Naive thymus-derived CD4-positive, alpha-beta T cell (primary cell): ENCODE measurements at regions of chr1 and their contacts with region 1.

Region 1: DNA sequence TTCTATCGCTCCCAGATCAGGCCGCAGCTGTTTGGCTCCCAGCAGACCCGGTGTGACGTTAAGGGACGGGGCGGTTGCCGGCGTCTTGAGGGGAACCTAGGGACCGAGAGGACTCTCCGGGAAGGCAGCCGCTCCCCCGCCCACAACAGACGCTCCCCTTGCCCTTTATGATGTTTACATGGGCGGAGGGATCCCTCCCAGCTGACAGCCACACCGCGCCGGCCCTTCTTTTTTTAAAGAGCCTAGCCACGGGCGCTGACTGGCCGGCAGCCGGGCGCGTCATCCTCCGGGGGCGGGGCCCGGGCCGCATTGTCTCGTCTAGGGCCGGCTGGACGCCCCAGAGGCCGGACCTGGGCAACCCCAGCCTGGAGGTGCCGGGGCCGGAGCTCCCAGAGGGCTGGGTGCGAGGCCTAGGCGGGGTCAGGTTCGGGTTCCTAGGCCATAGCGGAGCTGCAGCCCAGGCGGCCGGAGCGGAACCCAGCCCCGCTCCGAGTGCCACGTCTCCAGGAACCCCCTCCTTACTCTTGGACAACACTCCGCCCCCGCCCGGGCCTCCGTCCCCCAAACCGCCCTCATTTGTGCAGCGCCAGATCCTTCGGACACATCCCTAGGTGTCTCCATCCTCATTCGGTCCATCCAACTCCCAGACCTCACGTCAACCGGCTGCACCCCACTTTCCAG is at the start of gene PCAT6:
- DNase-seq: peak; percentile 70 to 90 (median 83)
- ATAC-seq: peak; percentile 90
- H3K4me3 ChIP-seq: peak within 1 kb of the TSS; percentile 84
- H3K4me3 Mint-ChIP-seq: peak within 1 kb of the TSS; percentile 88 to 94 (median 90)
- H3K27ac ChIP-seq: peak within 1 kb of the TSS; percentile 70
- H3K27ac Mint-ChIP-seq: peak within 1 kb of the TSS; percentile 49 to 93 (median 90)
- H3K4me1 ChIP-seq: peaks cover 19% of the 10 kb centered on the region in 2 donors
- H3K4me1 Mint-ChIP-seq: peaks cover 27 to 42% (median 39%) of the 10 kb centered on the region in 7 donors
- H3K27me3 ChIP-seq: no peaks in the 10 kb centered on the region
- H3K27me3 Mint-ChIP-seq: peaks cover 0 to 18% (median 0%) of the 10 kb centered on the region in 5 donors
- total RNA-seq, gene PCAT6: 0.70 to 1.5 (median 0.94) TPM in 4 of 5 experiments, not detected in the other

Region 2: GRCh38 chr1:202160377-202160940 is 650.3 kb before region 1 on chr1 and contains the start of gene PTPN7:
- CTCF ChIA-PET with region 1: no interaction called
- POLR2A ChIA-PET with region 1: no interaction called
- intact Hi-C with region 1: loop called in 1 of 2 experiments (anchors 5 kb)
- DNase-seq: peak; percentile 58 to 84 (median 80)
- ATAC-seq: peak; percentile 80
- H3K4me3 ChIP-seq: peak within 1 kb of the TSS; percentile 98
- H3K4me3 Mint-ChIP-seq: peak within 1 kb of the TSS; percentile 91 to 99 (median 98)
- H3K27ac ChIP-seq: peak within 1 kb of the TSS; percentile 90
- H3K27ac Mint-ChIP-seq: peak within 1 kb of the TSS; percentile 97 to 99 (median 98)
- H3K4me1 ChIP-seq: peaks cover 77 to 84% of the 10 kb centered on the region in 2 donors
- H3K4me1 Mint-ChIP-seq: peaks cover 47 to 98% (median 82%) of the 10 kb centered on the region in 7 donors
- H3K27me3 ChIP-seq: no peaks in the 10 kb centered on the region
- H3K27me3 Mint-ChIP-seq: no peaks in the 10 kb centered on the region
- total RNA-seq, gene PTPN7: 43.2 to 258 (median 97.0) TPM

Region 3: GRCh38 chr1:202416641-202417040 is 394.1 kb before region 1 on chr1:
- CTCF ChIA-PET with region 1: no interaction called
- POLR2A ChIA-PET with region 1: no interaction called
- intact Hi-C with region 1: no loop called
- DNase-seq: no peak
- ATAC-seq: no peak
- H3K4me3 ChIP-seq: no peak overlapping the region
- H3K4me3 Mint-ChIP-seq: no peak overlapping the region
- H3K27ac ChIP-seq: no peak overlapping the region
- H3K27ac Mint-ChIP-seq: no peak overlapping the region
- H3K4me1 ChIP-seq: no peaks in the 10 kb centered on the region
- H3K4me1 Mint-ChIP-seq: peaks cover 0 to 1% (median 0%) of the 10 kb centered on the region in 7 donors
- H3K27me3 ChIP-seq: no peaks in the 10 kb centered on the region
- H3K27me3 Mint-ChIP-seq: no peaks in the 10 kb centered on the region

Region 4: DNA sequence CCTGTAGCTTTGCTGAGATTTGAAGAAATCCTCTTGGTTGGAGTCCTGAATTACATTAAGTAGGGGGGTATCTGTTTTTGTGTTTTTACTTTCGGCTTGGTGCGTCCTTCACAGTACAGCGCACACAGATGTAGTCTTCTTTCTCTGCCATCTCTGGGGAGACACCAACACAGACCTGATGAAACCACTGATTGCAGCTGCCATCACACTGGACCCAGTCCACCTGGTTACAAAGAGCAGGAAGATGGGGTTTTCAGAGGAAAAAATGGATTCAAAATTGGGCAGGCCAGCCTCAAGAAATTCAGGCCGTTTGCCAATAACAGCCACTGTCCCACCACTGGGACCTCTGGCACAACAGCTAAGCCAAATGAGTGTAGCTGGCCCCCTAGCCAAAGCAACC is 81.8 kb before region 1 on chr1:
- CTCF ChIA-PET with region 1: no interaction called
- POLR2A ChIA-PET with region 1: no interaction called
- intact Hi-C with region 1: no loop called
- DNase-seq: no peak
- ATAC-seq: no peak
- H3K4me3 ChIP-seq: no peak overlapping the region
- H3K4me3 Mint-ChIP-seq: no peak overlapping the region
- H3K27ac ChIP-seq: no peak overlapping the region
- H3K27ac Mint-ChIP-seq: peak overlapping the region in 2 of 9 donors; percentile 2 to 64
- H3K4me1 ChIP-seq: no peaks in the 10 kb centered on the region
- H3K4me1 Mint-ChIP-seq: peaks cover 0 to 4% (median 0%) of the 10 kb centered on the region in 7 donors
- H3K27me3 ChIP-seq: no peaks in the 10 kb centered on the region
- H3K27me3 Mint-ChIP-seq: no peaks in the 10 kb centered on the region

Region 5: DNA sequence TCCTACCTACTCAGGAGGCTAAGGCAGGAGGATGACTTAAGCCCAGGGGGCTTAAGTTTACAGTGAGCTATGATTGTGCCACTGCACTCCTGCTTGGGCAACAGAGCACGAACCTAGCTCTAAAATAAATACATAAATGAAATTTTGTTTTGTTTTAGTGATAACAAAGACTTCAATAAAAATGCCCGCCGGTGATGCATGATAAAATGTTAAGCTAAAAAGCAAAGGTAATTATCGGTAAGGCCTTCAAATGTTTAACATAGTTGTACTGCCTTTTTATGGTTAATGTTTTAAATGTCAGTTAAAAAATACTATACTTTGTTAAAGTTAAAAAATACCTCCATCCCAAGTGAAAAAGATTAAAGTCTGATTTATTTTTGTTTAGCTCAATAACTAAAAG is 29.6 kb before region 1 on chr1:
- CTCF ChIA-PET with region 1: no interaction called
- POLR2A ChIA-PET with region 1: interaction called, 4 read pairs
- intact Hi-C with region 1: loop called in 1 of 2 experiments (anchors 2 kb)
- DNase-seq: no peak
- ATAC-seq: no peak
- H3K4me3 ChIP-seq: no peak overlapping the region
- H3K4me3 Mint-ChIP-seq: no peak overlapping the region
- H3K27ac ChIP-seq: no peak overlapping the region
- H3K27ac Mint-ChIP-seq: peak overlapping the region in 1 of 9 donors; percentile 62
- H3K4me1 ChIP-seq: no peaks in the 10 kb centered on the region
- H3K4me1 Mint-ChIP-seq: peaks cover 8 to 57% (median 32%) of the 10 kb centered on the region in 7 donors
- H3K27me3 ChIP-seq: no peaks in the 10 kb centered on the region
- H3K27me3 Mint-ChIP-seq: no peaks in the 10 kb centered on the region

Region 6: GRCh38 chr1:202888531-202889360 is 78.0 kb after region 1 on chr1 and contains the start of gene RABIF:
- CTCF ChIA-PET with region 1: no interaction called
- POLR2A ChIA-PET with region 1: interaction called, 8 read pairs
- intact Hi-C with region 1: loop called (anchors 1 kb)
- DNase-seq: peak; percentile 93 to 97 (median 95)
- ATAC-seq: peak; percentile 94
- H3K4me3 ChIP-seq: peak within 1 kb of the TSS; percentile 90
- H3K4me3 Mint-ChIP-seq: peak within 1 kb of the TSS; percentile 85 to 100 (median 97)
- H3K27ac ChIP-seq: peak within 1 kb of the TSS; percentile 86
- H3K27ac Mint-ChIP-seq: peak within 1 kb of the TSS; percentile 88 to 99 (median 98)
- H3K4me1 ChIP-seq: peaks cover 6 to 12% of the 10 kb centered on the region in 2 donors
- H3K4me1 Mint-ChIP-seq: peaks cover 13 to 37% (median 29%) of the 10 kb centered on the region in 7 donors
- H3K27me3 ChIP-seq: no peaks in the 10 kb centered on the region
- H3K27me3 Mint-ChIP-seq: no peaks in the 10 kb centered on the region
- total RNA-seq, gene RABIF: 11.6 to 17.1 (median 14.5) TPM

Region 7: DNA sequence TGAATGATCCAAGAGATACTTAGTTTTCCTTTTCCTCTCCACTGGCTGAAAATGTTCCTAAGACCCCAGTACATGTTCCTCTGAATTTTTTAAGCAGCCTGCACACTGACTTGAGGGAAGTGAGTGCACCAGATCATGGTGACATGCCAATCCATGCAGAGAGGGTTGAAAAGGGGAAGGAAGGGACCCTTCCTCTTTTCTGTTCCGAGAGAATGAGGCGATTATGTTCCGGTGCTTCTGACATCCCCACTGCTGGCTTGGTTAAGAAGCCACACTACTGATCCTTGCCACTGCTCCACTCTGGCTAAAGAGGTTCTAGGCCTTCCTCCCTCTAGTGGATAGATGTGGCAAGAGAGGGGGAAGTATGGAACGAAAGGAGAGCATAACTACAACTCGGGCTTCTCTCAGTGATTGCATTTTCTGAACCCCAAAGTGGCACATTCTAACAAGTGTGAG is 158.1 kb after region 1 on chr1:
- CTCF ChIA-PET with region 1: no interaction called
- POLR2A ChIA-PET with region 1: no interaction called
- intact Hi-C with region 1: loop called in 1 of 2 experiments (anchors 2 kb)
- DNase-seq: peak in 7 of 9 donors; percentile 24 to 64 (median 47)
- ATAC-seq: peak; percentile 73
- H3K4me3 ChIP-seq: no peak overlapping the region
- H3K4me3 Mint-ChIP-seq: peak overlapping the region in 9 of 10 donors; percentile 40 to 98 (median 94)
- H3K27ac ChIP-seq: peak overlapping the region; percentile 83
- H3K27ac Mint-ChIP-seq: peak overlapping the region in 8 of 9 donors; percentile 80 to 96 (median 94)
- H3K4me1 ChIP-seq: peaks cover 14 to 20% of the 10 kb centered on the region in 2 donors
- H3K4me1 Mint-ChIP-seq: peaks cover 15 to 34% (median 27%) of the 10 kb centered on the region in 7 donors
- H3K27me3 ChIP-seq: no peaks in the 10 kb centered on the region
- H3K27me3 Mint-ChIP-seq: peaks cover 0 to 15% (median 0%) of the 10 kb centered on the region in 5 donors

Region 8: GRCh38 chr1:202987922-202988583 is 177.3 kb after region 1 on chr1:
- CTCF ChIA-PET with region 1: no interaction called
- POLR2A ChIA-PET with region 1: no interaction called
- intact Hi-C with region 1: no loop called
- DNase-seq: no peak
- ATAC-seq: no peak
- H3K4me3 ChIP-seq: no peak overlapping the region
- H3K4me3 Mint-ChIP-seq: no peak overlapping the region
- H3K27ac ChIP-seq: no peak overlapping the region
- H3K27ac Mint-ChIP-seq: no peak overlapping the region
- H3K4me1 ChIP-seq: no peaks in the 10 kb centered on the region
- H3K4me1 Mint-ChIP-seq: peaks cover 0 to 4% (median 0%) of the 10 kb centered on the region in 7 donors
- H3K27me3 ChIP-seq: peaks cover 0 to 1% of the 10 kb centered on the region in 2 donors
- H3K27me3 Mint-ChIP-seq: peaks cover 10 to 40% (median 14%) of the 10 kb centered on the region in 5 donors

Region 9: DNA sequence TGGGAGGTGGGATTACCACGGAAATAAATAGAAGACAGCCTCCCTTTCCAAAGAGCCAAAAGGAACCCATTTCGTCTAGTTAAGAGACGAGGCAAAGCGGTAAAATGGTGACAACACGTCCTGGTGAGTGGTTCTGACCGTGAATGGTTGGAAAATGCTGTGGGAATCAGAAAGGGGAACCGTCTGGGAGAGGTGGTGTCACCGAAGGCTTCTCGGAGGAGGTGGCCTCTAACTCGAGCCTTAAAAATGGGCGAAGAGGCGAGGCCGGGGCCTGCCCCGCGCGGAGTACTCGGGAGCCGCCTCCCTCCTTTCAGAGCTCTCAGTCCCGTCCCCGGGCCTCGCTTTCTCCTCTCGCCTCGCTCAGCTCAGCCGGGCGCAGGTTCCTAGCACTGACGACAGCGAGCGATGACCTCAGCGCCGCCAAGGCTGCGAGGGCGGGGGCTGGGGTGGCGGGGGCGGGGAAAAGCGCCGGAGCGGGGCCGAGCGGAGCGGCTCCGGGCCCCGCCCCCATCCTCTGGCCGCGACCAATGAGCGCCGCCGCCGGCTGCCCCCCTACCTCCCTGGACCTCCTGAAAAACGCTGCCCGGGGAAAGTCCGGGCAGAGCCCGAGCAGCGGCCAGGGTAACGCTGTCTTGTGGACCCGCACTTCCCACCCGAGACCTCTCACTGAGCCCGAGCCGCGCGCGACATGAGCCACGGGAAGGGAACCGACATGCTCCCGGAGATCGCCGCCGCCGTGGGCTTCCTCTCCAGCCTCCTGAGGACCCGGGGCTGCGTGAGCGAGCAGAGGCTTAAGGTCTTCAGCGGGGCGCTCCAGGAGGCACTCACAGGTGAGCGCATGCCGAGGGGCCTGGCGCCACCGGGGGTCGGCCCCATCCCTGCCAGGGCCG is 494.4 kb after region 1 on chr1 and contains the start of gene BTG2:
- CTCF ChIA-PET with region 1: no interaction called
- POLR2A ChIA-PET with region 1: interaction called, 4 read pairs
- intact Hi-C with region 1: loop called in 1 of 2 experiments (anchors 5 kb)
- DNase-seq: peak; percentile 83 to 94 (median 89)
- ATAC-seq: peak; percentile 90
- H3K4me3 ChIP-seq: peak within 1 kb of the TSS; percentile 86
- H3K4me3 Mint-ChIP-seq: peak within 1 kb of the TSS; percentile 89 to 100 (median 96)
- H3K27ac ChIP-seq: peak within 1 kb of the TSS; percentile 100
- H3K27ac Mint-ChIP-seq: peak within 1 kb of the TSS; percentile 96 to 100 (median 99)
- H3K4me1 ChIP-seq: peaks cover 22 to 40% of the 10 kb centered on the region in 2 donors
- H3K4me1 Mint-ChIP-seq: peaks cover 54 to 65% (median 60%) of the 10 kb centered on the region in 7 donors
- H3K27me3 ChIP-seq: no peaks in the 10 kb centered on the region
- H3K27me3 Mint-ChIP-seq: no peaks in the 10 kb centered on the region
- total RNA-seq, gene BTG2: 141 to 654 (median 241) TPM

Region 10: GRCh38 chr1:204420091-204421004 is 1609.6 kb after region 1 on chr1:
- CTCF ChIA-PET with region 1: no interaction called
- POLR2A ChIA-PET with region 1: no interaction called
- intact Hi-C with region 1: loop called in 1 of 2 experiments (anchors 5 kb)
- DNase-seq: no peak
- ATAC-seq: no peak
- H3K4me3 ChIP-seq: no peak overlapping the region
- H3K4me3 Mint-ChIP-seq: no peak overlapping the region
- H3K27ac ChIP-seq: no peak overlapping the region
- H3K27ac Mint-ChIP-seq: peak overlapping the region in 2 of 9 donors; percentile 23 to 26
- H3K4me1 ChIP-seq: no peaks in the 10 kb centered on the region
- H3K4me1 Mint-ChIP-seq: peaks cover 0 to 20% (median 5%) of the 10 kb centered on the region in 7 donors
- H3K27me3 ChIP-seq: no peaks in the 10 kb centered on the region
- H3K27me3 Mint-ChIP-seq: no peaks in the 10 kb centered on the region